B cell (primary cell): ENCODE measurements at regions of chr4 and their contacts with region 1.

Region 1: GRCh38 chr4:152679414-152680281 is at the start of gene TMEM154:
- DNase-seq: peak; percentile 89
- ATAC-seq: peak; percentile 89
- H3K4me3 ChIP-seq: peak within 1 kb of the TSS; percentile 60 to 97 (median 85)
- H3K4me3 Mint-ChIP-seq: peak within 1 kb of the TSS; percentile 92
- H3K27ac ChIP-seq: peak within 1 kb of the TSS; percentile 73 to 81
- H3K27ac Mint-ChIP-seq: peak within 1 kb of the TSS; percentile 97
- H3K4me1 ChIP-seq: peaks cover 61 to 69% of the 10 kb centered on the region in 2 donors
- H3K4me1 Mint-ChIP-seq: peaks cover 76% of the 10 kb centered on the region
- H3K27me3 ChIP-seq: no peaks in the 10 kb centered on the region
- H3K27me3 Mint-ChIP-seq: no peaks in the 10 kb centered on the region
- CTCF ChIP-seq: no peak
- total RNA-seq, gene TMEM154: 96.6 and 99.1 TPM in 2 replicates

Region 2: DNA sequence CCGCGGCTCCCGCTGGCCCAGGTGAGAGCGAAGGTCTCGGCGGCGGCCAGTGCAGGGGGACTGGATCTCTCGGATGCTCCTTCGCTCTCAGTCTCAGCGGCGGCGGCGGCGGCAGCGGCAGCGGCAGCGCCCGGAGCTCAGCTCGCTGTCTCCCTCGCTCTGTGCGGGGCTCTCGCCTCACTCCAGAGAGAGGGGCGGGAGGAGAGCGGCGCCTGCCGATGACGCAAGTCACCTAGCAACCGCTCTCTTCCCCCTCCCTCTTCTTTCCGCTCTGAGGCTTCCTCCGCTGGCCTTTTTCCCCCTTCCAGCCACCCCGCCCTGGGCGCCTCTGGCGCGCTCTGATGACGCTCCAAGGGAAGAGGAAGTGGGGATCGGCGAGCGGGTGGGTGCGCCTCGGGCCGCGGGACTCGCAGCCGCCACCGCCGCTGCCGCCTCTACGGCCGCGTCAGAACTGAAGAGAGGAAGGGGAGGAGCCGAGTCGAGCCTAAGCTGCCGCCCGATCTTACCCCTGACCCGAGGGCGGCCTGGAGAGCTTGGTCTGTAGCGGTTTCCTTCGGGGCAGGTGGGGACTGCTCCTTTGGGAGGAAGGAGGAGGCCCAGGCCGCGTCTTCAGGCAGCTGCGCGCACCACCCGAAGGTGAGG is 143.6 kb before region 1 on chr4 and contains the start of gene FBXW7:
- CTCF ChIA-PET with region 1: interaction called, 4 read pairs
- POLR2A ChIA-PET with region 1: no interaction called
- intact Hi-C with region 1: loop called (anchors 1 kb)
- DNase-seq: peak; percentile 100
- ATAC-seq: peak; percentile 83
- H3K4me3 ChIP-seq: peak within 1 kb of the TSS; percentile 58 to 91 (median 81)
- H3K4me3 Mint-ChIP-seq: peak within 1 kb of the TSS; percentile 98
- H3K27ac ChIP-seq: peak within 1 kb of the TSS; percentile 83 to 88
- H3K27ac Mint-ChIP-seq: peak within 1 kb of the TSS; percentile 96
- H3K4me1 ChIP-seq: peaks cover 27 to 36% of the 10 kb centered on the region in 2 donors
- H3K4me1 Mint-ChIP-seq: peaks cover 67% of the 10 kb centered on the region
- H3K27me3 ChIP-seq: no peaks in the 10 kb centered on the region
- H3K27me3 Mint-ChIP-seq: no peaks in the 10 kb centered on the region
- CTCF ChIP-seq: no peak
- total RNA-seq, gene FBXW7: 117 and 125 TPM in 2 replicates

Region 3: DNA sequence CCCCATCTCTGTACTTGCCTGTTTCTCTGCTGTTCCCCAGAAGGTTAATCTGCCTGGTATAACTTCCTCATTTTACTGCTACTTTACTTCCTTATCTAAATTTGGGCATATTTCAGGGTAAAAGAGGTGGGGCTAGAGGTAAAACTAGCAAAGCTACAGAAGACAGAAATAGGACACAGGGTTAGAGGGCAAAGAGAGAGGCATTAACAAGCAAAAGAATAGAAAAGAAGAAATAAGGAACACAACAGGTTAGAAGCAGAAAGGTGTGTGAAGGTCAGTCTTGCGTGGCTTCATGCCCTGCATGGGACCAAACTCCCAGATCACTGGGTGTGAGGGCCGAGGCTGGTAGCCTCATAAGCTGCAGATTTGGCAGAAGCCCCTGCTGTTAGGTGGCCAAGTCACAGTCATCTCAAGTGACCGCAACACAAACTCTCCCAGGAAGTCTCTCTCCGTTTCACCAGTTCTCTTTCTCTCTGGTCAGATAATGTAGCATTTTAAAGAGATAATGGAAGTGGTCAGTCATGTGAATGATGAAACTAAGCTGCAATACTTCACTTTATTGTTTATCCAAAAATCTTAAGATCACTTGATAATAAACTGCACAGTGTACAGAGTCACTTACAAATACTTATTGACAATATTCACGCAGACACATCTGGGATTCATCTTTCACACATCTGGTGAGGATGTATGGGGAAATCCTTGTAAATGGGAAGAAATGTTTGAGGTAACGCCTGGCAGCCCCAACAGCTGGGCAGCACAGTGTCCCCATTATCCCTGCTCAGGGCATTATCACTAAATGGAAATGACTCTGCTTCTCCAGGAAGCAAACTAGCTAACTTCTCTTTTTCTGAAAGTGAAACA is 16.2 kb before region 1 on chr4:
- CTCF ChIA-PET with region 1: interaction called, 13 read pairs
- POLR2A ChIA-PET with region 1: interaction called, 10 read pairs
- intact Hi-C with region 1: loop called (anchors 1 kb)
- DNase-seq: peak; percentile 82
- ATAC-seq: peak; percentile 67
- H3K4me3 ChIP-seq: peak overlapping the region; percentile 30 to 55 (median 52)
- H3K4me3 Mint-ChIP-seq: peak overlapping the region; percentile 77
- H3K27ac ChIP-seq: peak overlapping the region; percentile 84
- H3K27ac Mint-ChIP-seq: peak overlapping the region; percentile 89
- H3K4me1 ChIP-seq: peaks cover 94% of the 10 kb centered on the region in 2 donors
- H3K4me1 Mint-ChIP-seq: peaks cover 91% of the 10 kb centered on the region
- H3K27me3 ChIP-seq: no peaks in the 10 kb centered on the region
- H3K27me3 Mint-ChIP-seq: no peaks in the 10 kb centered on the region
- CTCF ChIP-seq: no peak

Region 4: DNA sequence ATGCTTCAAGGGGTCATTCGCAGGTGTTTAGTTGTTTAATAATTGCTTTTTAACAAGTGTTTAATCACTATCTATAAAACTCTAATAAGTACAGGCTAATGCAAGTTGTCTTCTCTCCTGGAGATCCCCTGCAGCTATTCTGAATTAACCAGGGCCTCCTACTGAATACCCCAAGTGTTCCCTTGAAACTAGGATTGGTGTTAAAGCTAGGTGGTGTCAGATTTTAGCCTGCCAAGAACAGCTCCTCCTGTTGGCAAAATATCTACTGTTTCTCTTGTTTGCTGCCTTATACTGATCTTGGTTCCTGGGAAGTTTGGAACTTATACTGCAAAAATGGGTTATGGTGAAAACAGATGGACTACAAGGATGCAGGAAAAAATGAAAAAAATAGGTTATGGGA is 26.3 kb after region 1 on chr4:
- CTCF ChIA-PET with region 1: no interaction called
- POLR2A ChIA-PET with region 1: no interaction called
- intact Hi-C with region 1: no loop called
- DNase-seq: no peak
- ATAC-seq: no peak
- H3K4me3 ChIP-seq: no peak overlapping the region
- H3K4me3 Mint-ChIP-seq: no peak overlapping the region
- H3K27ac ChIP-seq: no peak overlapping the region
- H3K27ac Mint-ChIP-seq: no peak overlapping the region
- H3K4me1 ChIP-seq: peaks cover 0 to 7% of the 10 kb centered on the region in 2 donors
- H3K4me1 Mint-ChIP-seq: peaks cover 5% of the 10 kb centered on the region
- H3K27me3 ChIP-seq: no peaks in the 10 kb centered on the region
- H3K27me3 Mint-ChIP-seq: no peaks in the 10 kb centered on the region
- CTCF ChIP-seq: no peak

Region 5: DNA sequence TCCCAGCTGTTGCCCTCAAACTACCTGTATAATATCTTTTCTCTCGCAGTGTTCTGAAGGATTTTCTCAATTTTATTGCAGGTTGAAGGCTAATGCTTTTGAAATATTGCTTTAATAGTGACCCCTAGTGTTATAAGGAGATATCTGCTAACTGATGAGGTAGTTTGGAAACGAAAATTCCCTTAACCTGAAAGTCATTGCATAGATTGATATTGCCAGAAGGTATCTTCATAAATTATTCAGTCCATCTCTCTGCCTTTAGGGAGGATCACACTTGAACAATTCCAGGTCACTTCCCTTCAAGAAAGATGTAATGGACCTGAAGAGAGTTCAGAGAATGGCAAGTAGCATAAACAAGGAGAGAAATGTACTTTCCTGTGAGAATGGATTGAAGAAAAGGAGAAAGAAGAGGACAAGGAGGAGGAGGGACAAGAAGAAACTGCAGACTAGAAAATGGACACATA is 55.8 kb after region 1 on chr4:
- CTCF ChIA-PET with region 1: interaction called, 42 read pairs
- POLR2A ChIA-PET with region 1: no interaction called
- intact Hi-C with region 1: loop called (anchors 2 kb)
- DNase-seq: peak; percentile 64
- ATAC-seq: peak; percentile 57
- H3K4me3 ChIP-seq: no peak overlapping the region
- H3K4me3 Mint-ChIP-seq: no peak overlapping the region
- H3K27ac ChIP-seq: no peak overlapping the region
- H3K27ac Mint-ChIP-seq: no peak overlapping the region
- H3K4me1 ChIP-seq: peaks cover 5 to 12% of the 10 kb centered on the region in 2 donors
- H3K4me1 Mint-ChIP-seq: peaks cover 16% of the 10 kb centered on the region
- H3K27me3 ChIP-seq: no peaks in the 10 kb centered on the region
- H3K27me3 Mint-ChIP-seq: no peaks in the 10 kb centered on the region
- CTCF ChIP-seq: peak; percentile 80

Region 6: DNA sequence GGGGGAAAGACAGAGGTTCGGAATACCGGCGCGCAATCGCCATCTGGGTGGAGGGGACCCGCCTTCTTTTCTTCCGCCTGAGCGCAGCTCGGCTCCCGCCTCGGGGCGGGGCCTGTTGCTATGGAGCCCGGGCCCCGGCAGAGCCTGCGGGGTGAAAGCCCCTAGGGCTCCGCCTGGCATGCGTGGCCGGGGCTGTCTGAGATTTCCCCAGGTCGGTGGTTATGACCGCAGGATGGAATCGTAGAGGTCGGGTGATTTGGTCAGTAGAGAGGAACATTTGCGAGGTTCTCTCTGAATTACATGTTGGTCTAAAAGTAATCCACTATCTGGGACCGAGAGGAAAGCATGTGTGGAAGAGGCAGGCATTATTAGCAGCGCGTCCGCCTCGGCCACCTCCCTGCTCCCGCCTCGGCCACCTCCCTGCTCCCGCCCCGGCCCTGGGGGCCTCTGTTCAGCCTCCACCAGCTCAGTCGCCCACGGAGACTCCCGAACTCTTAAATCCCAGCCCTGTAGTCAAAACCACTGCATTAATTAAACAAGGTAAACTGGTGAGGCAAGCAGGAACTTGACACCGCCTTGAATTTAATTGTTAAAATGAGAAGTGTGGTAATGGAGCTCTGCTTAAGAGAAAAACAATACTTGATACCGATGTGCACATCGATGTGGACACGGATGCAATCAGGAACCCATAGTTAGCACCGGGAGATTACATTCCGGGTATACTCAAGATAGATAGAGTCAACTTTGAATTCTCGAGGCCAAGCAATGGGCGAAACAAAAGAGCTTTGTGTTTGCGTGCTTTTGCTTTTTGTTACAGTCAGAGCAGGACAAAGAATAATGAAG is 569.8 kb after region 1 on chr4:
- CTCF ChIA-PET with region 1: no interaction called
- POLR2A ChIA-PET with region 1: interaction called, 11 read pairs
- intact Hi-C with region 1: no loop called
- DNase-seq: peak; percentile 96
- ATAC-seq: peak; percentile 98
- H3K4me3 ChIP-seq: peak overlapping the region; percentile 47 to 81 (median 61)
- H3K4me3 Mint-ChIP-seq: peak overlapping the region; percentile 93
- H3K27ac ChIP-seq: peak overlapping the region; percentile 72 to 87
- H3K27ac Mint-ChIP-seq: peak overlapping the region; percentile 85
- H3K4me1 ChIP-seq: peaks cover 12 to 22% of the 10 kb centered on the region in 2 donors
- H3K4me1 Mint-ChIP-seq: peaks cover 21% of the 10 kb centered on the region
- H3K27me3 ChIP-seq: peaks cover 0 to 3% (median 0%) of the 10 kb centered on the region in 4 experiments
- H3K27me3 Mint-ChIP-seq: no peaks in the 10 kb centered on the region
- CTCF ChIP-seq: no peak